ENCODE measurements at regions of chr15 and their contacts with region 1.

Region 1: DNA sequence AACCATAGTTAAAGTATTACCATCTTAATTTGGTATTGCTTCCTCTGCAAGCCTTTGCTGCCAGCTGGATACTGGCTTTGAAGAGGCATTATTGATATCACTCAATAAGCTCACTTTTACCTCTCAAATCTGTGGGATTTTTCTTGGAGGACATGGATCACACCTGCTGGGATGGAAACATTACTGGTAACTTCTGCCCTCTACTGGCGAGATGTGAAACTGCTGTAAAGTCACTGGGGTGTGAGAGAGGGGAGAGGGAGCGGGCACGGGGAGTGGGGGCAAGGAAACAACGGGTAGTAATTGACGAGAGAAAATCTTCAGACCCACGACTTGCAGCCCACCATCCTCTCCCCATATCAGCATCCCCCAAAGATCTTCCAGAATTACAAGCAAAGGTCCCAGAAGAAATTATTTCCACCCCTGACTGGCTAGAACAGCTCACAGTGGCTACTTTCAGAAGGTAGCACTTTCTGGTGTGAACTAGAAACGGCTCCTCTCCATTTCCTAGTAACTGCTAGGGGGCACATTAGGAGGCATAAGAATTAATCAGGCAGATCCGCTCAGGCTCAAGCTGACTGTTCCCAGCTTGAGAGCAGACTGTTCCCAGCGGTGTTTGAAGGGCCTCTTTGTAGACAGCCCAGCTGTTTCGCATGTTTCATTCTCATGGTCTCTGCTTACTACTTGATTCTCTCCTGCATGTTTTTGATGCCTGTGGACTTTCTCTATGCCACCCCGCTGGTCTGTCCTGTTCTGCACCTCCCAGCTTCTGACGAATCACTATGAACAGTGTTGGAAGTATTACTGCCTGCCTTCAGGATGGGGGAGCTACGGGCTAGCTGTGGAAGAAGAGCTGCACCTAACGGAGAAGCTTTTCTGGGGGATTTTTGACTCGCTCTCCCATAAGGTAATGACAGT is 230.4 kb upstream of the CHRM5 start:
- DNase-seq: peak; percentile 22 to 39 (median 31)
- H3K4me3 ChIP-seq: no peak overlapping the region
- H3K27ac ChIP-seq: no peak overlapping the region
- H3K4me1 ChIP-seq: no peaks in the 10 kb centered on the region
- H3K27me3 ChIP-seq: no peaks in the 10 kb centered on the region

Region 2: DNA sequence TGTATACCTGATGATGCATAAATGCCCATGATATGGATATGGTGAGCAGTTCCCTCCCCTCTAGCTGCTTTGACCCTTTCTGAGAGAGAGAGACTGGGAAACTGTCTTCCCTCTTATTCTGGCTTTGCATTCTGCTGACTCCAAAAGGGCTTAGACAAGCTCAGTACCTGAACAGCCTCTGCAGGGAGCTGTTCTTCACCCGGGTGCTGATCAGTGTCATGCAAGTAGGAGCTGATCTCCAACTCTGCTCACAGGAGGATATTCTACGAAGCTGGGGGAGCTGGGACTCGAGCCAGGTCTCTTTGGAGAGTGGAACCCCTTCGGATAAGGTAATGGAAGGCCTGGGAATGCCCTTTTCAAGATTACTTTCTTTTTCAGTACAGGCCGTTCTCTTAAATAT is 190.1 kb before region 1 on chr15:
- CTCF ChIA-PET with region 1: no interaction called
- POLR2A ChIA-PET with region 1: no interaction called
- DNase-seq: peak; percentile 36 to 64 (median 59)
- H3K4me3 ChIP-seq: no peak overlapping the region
- H3K27ac ChIP-seq: no peak overlapping the region
- H3K4me1 ChIP-seq: no peaks in the 10 kb centered on the region
- H3K27me3 ChIP-seq: no peaks in the 10 kb centered on the region

Region 3: GRCh38 chr15:33724321-33725036 is 13.5 kb before region 1 on chr15:
- CTCF ChIA-PET with region 1: interaction called, 14 read pairs
- POLR2A ChIA-PET with region 1: no interaction called
- DNase-seq: no peak
- H3K4me3 ChIP-seq: no peak overlapping the region
- H3K27ac ChIP-seq: no peak overlapping the region
- H3K4me1 ChIP-seq: peaks cover 0 to 8% (median 0%) of the 10 kb centered on the region in 4 experiments
- H3K27me3 ChIP-seq: no peaks in the 10 kb centered on the region

Region 4: DNA sequence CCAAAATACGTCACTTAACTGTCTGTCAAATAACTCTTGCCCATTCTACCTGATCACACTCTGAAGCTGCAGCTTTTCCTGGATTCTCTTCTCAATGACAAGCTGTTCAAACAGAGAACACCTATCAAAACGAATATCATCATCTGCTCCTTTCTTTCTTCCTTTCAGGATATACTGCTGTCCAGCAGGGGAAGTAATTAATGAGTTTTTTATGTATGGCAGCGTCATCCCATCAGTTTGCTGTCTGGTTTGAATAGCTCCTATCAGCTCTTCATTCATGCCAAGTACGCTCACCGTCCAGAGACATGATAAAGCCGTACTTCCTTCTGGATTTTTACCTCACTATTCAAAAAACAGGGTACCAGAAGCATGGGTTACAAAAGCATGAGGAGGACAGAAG is 230.3 kb after region 1 on chr15 and contains the start of gene CHRM5:
- CTCF ChIA-PET with region 1: interaction called, 31 read pairs
- POLR2A ChIA-PET with region 1: no interaction called
- DNase-seq: no peak
- H3K4me3 ChIP-seq: no peak within 1 kb of the TSS
- H3K27ac ChIP-seq: no peak within 1 kb of the TSS
- H3K4me1 ChIP-seq: no peaks in the 10 kb centered on the region
- H3K27me3 ChIP-seq: no peaks in the 10 kb centered on the region

Region 5: DNA sequence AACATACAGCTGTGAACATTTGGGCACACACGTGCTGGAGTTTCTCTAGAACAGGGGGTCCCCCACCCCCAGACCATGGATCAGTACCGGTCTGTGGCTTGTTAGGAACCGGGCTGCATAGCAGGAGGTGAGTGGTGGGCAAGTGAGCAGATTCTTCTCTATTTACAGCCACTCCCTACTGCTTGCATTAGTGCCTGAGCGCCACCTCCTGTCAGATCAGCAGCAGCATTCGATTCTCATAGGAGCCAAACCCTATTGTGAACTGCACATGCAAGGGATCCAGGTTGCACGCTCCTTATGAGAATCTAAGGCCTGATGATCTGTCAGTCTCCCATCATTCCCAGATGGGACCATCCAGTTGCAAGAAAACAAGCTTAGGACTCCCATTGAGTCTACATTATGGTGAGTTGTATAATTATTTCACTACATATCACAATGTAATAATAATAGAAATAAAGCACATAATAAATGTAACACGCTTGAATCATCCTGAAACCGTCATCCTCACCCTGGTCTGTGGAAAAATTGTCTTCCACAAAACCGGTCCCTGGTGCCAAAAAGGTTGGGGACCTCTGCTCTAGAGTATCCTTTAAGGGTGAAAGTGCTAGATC is 256.2 kb after region 1 on chr15:
- CTCF ChIA-PET with region 1: interaction called, 17 read pairs
- POLR2A ChIA-PET with region 1: no interaction called
- DNase-seq: peak; percentile 19 to 42 (median 34)
- H3K4me3 ChIP-seq: no peak overlapping the region
- H3K27ac ChIP-seq: no peak overlapping the region
- H3K4me1 ChIP-seq: no peaks in the 10 kb centered on the region
- H3K27me3 ChIP-seq: no peaks in the 10 kb centered on the region

Measured in common myeloid progenitor, CD34-positive (primary cell).